Activated T-helper 2 cell treated with anti-CD3 and anti-CD28 coated beads, Interferon-gamma antibody, Interleukin-2, Interleukin-4, amounts not matched to agents 10 μg/mL and 5 μg/mL and 100 μg/mL, durations not matched to agents 14 hours and 24 hours and 36 hours (primary cell): ENCODE measurements at regions of chr6 and their contacts with region 1.

Region 1: GRCh38 chr6:20212392-20213217 is at the start of gene MBOAT1:
- DNase-seq: peak; percentile 77
- H3K4me3 Mint-ChIP-seq: peak within 1 kb of the TSS; percentile 90
- H3K27ac Mint-ChIP-seq: peak within 1 kb of the TSS; percentile 94
- H3K4me1 Mint-ChIP-seq: peaks cover 41% of the 10 kb centered on the region
- H3K27me3 Mint-ChIP-seq: no peaks in the 10 kb centered on the region
- total RNA-seq, gene MBOAT1: 32.8 and 33.8 TPM in 2 replicates

Region 2: DNA sequence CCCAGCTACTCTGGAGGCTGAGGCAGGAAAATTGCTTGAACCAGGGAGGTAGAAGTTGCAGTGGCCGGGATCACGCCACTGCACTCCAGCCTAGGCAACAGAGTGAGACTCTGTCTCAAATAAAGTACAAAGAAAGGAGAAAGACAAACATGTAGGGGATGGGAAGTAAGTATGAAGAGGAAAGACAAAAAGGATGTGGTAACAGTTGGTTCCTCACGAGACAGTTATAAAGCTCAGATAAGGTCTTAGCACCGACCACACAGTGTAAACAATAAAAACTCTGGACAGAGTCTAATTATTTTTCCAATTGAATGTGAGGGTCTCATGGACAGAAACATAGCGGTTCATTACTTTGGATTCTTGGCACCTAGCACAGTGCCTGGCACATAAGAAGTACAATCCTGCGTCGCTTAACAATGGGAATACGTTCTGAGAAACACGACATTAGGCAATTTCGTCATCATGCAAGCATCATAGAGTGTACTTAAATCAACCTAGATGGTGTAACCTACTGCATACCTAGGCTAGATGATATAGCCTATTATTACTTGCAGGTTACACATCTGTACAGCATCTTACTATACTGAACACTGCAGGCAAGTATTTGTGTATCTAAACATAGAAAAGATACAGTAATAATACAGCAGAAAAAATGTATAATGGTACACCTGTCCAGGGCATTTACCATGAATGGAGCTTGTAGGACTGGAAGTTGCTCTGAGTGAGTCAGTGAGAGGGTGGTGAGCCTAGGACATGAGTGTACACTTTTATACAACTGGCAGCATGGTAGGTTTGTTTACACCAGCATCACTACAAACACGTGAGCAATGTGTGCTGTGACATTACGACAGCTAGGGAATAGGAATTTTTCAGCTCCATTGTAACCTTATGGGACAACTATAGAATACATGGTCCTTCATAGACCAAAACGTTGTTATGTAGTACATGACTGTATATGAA is 38.5 kb before region 1 on chr6:
- intact Hi-C with region 1: loop called (anchors 1 kb)
- DNase-seq: no peak
- H3K4me3 Mint-ChIP-seq: peak overlapping the region; percentile 45
- H3K27ac Mint-ChIP-seq: peak overlapping the region; percentile 51
- H3K4me1 Mint-ChIP-seq: peaks cover 44% of the 10 kb centered on the region
- H3K27me3 Mint-ChIP-seq: no peaks in the 10 kb centered on the region

Region 3: GRCh38 chr6:20202324-20202658 is 10.3 kb before region 1 on chr6:
- intact Hi-C with region 1: loop called (anchors 1 kb)
- DNase-seq: no peak
- H3K4me3 Mint-ChIP-seq: no peak overlapping the region
- H3K27ac Mint-ChIP-seq: peak overlapping the region; percentile 96
- H3K4me1 Mint-ChIP-seq: peaks cover 73% of the 10 kb centered on the region
- H3K27me3 Mint-ChIP-seq: no peaks in the 10 kb centered on the region

Region 4: DNA sequence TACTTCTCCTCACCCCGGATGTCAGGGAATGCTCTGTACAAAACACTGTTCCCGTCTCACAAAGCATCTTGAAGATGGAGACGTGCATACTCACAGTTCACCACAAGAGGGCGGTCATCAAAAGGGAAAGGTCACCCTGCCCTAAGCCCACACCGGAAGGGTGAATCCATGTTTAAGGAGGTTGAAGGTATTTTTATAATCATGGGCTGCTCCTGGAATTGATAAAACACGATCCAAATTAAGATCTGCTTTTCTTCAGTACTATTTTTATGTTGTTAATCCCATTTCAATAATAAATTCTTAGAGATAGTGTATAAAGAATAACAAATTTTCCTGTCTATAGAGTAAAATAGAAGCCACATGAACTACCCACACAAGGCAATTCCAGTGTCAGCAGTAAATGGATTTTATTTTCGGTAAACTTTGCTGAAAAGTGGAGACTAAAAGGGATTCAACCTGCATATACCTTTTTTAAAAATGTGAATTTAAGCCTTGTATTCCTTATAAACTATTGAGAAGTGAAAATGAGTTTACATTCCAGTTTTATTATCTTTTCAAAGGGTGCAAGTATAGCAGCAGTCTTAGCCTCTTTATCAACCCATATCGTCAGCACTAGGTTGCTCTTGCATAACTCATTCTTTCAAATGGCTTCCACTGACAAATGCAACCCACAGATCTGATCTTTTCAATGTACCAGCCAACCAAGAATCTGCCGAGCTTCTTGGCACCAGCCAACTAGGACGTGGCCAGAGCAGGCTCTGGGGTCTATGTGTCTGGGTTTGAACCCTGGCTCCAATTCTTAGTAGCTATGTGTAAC is 79.4 kb after region 1 on chr6:
- intact Hi-C with region 1: loop called (anchors 5 kb)
- DNase-seq: peak; percentile 63
- H3K4me3 Mint-ChIP-seq: no peak overlapping the region
- H3K27ac Mint-ChIP-seq: no peak overlapping the region
- H3K4me1 Mint-ChIP-seq: peaks cover 38% of the 10 kb centered on the region
- H3K27me3 Mint-ChIP-seq: no peaks in the 10 kb centered on the region